ENCODE measurements at regions of chrX and their contacts with region 1.

Region 1: DNA sequence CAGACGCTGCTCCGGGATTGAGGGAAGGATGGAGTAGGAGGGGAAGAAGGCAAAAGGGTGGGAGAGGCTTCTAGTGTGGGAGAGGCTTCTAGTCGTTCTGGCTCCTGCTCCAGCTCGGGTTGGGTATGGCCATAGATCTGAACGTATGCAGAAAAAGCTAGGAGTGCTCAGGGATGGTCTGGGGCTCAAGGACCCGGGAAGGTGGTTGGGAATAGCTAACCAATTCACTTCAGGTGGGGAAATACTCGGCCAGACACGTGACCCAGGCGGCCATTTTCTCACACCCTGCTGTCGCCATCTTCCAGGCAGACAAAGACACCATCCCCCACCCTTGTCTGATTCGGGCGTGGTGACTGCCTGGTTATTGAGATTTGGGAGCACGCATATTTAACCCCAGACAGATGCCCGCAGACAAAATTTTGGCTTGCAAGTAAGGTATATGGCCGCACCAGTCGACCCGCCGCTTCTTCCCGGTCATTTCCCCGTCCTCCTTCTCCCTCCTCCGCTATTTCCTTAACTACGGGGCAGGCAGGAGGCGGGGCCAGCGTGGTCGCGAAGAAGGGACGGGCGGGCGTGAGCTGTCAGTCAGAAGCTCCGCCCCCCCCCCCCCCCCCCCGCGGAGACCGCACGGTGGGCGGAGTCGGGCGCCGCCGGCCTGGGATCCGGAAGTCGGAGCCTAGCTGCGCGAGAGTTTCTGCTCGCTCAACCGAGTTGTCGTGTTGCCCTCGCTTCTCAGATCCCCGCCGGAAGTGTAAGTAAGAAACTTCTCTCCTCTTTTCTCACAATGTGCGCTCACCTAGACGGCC is at the start of gene GNL3L:
- DNase-seq: peak; percentile 69
- H3K4me3 Mint-ChIP-seq: peak within 1 kb of the TSS; percentile 95
- H3K27ac Mint-ChIP-seq: peak within 1 kb of the TSS; percentile 94
- H3K4me1 Mint-ChIP-seq: peaks cover 26% of the 10 kb centered on the region
- H3K27me3 Mint-ChIP-seq: no peaks in the 10 kb centered on the region
- total RNA-seq, gene GNL3L: 75.5 and 76.1 TPM in 2 replicates

Region 2: DNA sequence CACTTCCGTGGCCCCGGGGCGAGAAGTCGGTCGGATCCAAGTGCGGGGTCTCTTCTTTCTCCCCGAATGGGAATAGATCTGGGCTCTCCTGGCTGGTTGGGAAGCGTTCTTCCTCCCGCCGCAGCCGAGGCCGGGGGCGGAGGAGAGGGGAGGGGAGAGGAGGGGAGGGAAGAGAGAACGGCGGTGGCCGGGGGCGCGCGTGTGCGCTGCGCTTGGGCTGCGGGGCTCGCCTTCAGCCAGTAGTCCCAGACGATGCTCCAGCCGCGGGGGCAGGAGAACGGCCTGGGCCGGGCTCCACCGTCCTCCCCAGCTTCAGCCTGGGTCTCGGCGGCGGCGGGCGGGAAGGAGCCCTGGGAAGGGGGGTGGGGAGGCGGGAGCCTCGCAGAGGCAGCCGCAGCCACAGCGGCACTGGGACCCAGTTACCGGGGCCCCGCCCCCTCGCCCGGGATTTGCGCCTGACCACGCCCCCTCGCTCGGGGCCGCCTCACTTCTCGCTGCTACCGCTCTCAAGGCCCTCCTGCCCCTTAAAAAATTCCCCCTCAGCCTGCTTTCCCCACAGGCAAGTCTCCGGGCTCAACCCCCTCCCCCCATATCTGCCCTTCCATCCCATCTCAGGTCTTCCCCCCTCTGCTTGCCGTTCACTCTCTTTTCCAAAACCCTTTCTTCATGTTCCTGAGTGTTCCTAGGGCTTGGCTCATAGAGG is 33.8 kb before region 1 on chrX and contains the start of gene FGD1:
- intact Hi-C with region 1: loop called (anchors 1 kb)
- DNase-seq: peak; percentile 12
- H3K4me3 Mint-ChIP-seq: peak within 1 kb of the TSS; percentile 71
- H3K27ac Mint-ChIP-seq: no peak within 1 kb of the TSS
- H3K4me1 Mint-ChIP-seq: no peaks in the 10 kb centered on the region
- H3K27me3 Mint-ChIP-seq: peaks cover 22% of the 10 kb centered on the region
- total RNA-seq, gene FGD1: 0.15 and 0.21 TPM in 2 replicates

Region 3: DNA sequence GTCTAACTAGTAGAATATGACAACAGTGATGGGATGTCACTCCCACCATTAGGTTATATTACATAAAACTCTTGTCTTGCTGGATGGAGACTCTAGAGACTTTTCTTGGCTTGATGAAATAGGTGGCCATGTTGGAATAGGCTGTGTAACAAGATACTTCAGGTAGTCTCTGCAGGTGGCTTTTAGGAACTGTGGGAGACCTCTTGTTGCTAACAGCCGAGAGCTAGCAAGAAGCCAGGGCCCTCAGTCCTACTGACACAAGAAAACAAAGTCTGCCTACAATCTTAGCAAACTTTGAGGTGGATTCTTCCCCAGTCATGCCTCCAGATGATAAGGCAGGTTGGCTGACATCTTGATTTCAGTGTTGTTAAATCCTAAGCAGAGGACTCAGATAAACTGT is 72.8 kb after region 1 on chrX:
- intact Hi-C with region 1: no loop called
- DNase-seq: no peak
- H3K4me3 Mint-ChIP-seq: no peak overlapping the region
- H3K27ac Mint-ChIP-seq: no peak overlapping the region
- H3K4me1 Mint-ChIP-seq: no peaks in the 10 kb centered on the region
- H3K27me3 Mint-ChIP-seq: no peaks in the 10 kb centered on the region

Region 4: GRCh38 chrX:54808605-54809483 is 279.1 kb after region 1 on chrX:
- intact Hi-C with region 1: loop called (anchors 2 kb)
- DNase-seq: peak; percentile 88
- H3K4me3 Mint-ChIP-seq: peak overlapping the region; percentile 89
- H3K27ac Mint-ChIP-seq: peak overlapping the region; percentile 85
- H3K4me1 Mint-ChIP-seq: peaks cover 17% of the 10 kb centered on the region
- H3K27me3 Mint-ChIP-seq: peaks cover 10% of the 10 kb centered on the region

Measured in activated T-helper 1 cell treated with anti-CD3 and anti-CD28 coated beads, Interleukin-12 subunit alpha, Interleukin-12 subunit beta, Interleukin-2, Interleukin-4 antibody, amounts not matched to agents 30 ng/mL and 10 ng/mL and 1 ng/mL, durations not matched to agents 14 hours and 24 hours and 36 hours (primary cell).